ENCODE measurements at regions of chr5 and their contacts with region 1.

Region 1: DNA sequence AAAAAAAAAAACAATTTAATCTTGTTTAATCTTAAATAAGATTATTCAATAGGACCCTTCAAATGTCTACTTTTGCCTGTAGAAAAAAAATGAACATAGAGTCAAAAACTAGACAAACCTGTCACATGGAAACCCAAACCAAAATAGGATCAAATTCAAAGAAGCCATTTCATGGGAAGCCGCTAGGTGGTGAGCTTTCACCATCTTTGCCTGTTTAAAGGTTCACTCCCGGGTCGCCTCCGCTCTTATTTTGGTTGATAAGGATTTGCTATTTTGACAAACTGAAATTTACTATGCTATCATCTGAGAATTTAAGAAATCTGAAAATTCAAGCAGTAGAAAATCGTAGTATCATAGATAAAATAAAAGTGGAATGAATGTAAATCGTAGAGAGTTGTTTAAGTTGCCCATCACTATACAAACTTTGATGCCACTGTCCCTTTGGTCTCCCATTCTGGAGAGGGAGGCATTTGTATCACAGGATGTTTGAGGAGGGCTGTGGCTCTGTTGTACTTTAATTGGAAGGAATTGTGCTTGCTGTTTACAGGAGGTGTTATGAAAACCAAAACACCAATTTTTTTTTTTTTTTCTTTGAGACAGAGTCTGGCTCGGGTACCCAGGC is 43.5 kb upstream of the DNAH5 start:
- DNase-seq: no peak
- ATAC-seq: no peak

Region 2: GRCh38 chr5:14108170-14108996 is 120.4 kb after region 1 on chr5:
- intact Hi-C with region 1: loop called (anchors 5 kb)
- DNase-seq: peak; percentile 52
- ATAC-seq: peak; percentile 85

Region 3: DNA sequence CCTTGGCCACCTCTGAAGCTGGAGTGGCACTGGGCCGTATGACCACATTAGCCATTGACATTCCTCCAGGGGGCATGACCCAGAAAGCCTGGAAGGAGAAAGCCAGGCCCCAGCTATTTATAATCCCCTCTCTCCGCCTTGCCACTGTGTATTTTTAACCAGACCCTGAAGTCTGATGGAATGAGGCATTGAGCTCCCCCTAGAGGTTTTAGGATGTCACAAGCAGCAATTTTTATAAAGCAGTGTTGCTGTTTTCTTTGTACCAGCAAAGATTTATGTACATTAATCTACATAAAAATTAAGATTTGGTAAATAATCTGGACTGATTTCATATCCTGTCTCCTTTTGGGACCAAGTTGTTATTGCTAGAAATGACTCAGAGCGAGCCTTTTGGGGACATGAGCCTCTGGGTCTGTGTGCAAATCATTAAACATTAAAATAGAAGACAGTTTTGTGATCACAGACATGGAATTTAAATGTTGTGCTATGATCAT is 282.3 kb after region 1 on chr5:
- intact Hi-C with region 1: loop called (anchors 5 kb)
- DNase-seq: no peak
- ATAC-seq: peak; percentile 93

Region 4: GRCh38 chr5:14351845-14352712 is 364.1 kb after region 1 on chr5:
- intact Hi-C with region 1: loop called (anchors 10 kb)
- DNase-seq: peak; percentile 82
- ATAC-seq: peak; percentile 85

Region 5: DNA sequence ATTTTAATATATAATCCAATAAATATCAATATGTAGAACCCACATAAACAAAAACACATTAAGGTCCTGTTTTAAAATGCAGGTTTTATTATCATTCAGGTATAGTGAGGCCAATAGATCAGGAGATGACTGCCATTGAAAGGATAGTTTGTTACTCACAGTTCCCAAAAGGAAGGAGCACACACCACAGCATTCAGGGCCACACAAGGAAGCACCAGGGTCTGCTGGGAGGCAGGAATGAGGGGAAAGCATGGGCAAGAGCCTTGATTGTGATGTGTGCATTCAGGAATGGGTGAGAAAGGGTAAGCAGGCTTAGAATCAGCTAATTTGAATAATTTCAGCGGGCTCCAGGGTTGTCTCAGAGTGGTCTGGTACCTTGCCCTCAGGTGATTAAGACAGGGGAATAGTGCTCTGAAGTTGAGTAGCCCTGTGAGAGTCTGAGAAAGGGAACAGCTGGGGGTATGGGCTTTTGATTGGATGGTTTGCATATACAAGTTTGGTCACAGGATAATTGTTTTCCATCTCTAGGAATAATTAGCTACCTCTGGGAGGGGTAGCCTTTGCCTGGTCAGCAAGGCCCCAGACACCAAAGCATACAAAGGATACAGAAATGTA is 656.8 kb after region 1 on chr5:
- intact Hi-C with region 1: loop called (anchors 5 kb)
- DNase-seq: no peak
- ATAC-seq: no peak

Measured in Right ventricle myocardium inferior (tissue), 1 donor.